ENCODE measurements at regions of chr6 and their contacts with region 1.

Region 1: DNA sequence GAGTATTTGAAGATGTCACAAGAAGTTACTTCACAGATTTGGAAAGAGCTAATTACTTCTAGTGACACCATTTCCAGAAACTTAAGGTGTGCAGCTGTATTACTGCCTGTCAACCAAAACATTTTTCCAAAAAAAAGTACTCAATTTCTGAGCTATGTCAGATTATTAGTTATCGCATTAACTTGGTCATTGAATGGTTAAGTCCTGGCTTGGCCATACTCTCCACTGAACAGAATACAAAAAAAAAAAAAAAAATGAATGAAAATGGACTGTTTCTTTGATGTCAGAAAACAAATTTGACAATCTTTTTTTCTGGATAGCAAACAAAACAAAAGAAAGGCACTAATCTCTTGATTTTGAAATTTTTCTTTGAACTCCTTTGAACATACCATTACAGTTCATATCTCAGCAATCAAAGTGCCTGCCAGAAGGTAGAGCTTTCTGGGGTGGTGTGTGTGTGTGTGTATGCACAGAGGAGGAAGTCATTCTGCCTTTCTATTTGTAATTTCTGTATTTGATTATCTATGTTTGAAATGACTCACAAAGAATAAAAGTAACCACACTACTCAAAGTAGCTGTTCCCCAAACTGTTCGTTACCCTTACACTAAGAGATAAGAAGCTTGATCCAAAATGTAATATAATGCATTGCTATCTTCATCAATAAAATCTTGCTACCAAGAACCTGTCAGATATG is 210.8 kb upstream of the FUT9 start:
- DNase-seq: peak; percentile 13
- H3K4me3 Mint-ChIP-seq: no peak overlapping the region
- H3K27ac Mint-ChIP-seq: no peak overlapping the region
- H3K4me1 Mint-ChIP-seq: peaks cover 14% of the 10 kb centered on the region
- H3K27me3 Mint-ChIP-seq: peaks cover 5% of the 10 kb centered on the region

Region 2: GRCh38 chr6:95577304-95578105 is 227.5 kb before region 1 on chr6 and contains the start of gene MANEA:
- intact Hi-C with region 1: loop called (anchors 1 kb)
- DNase-seq: peak; percentile 79
- H3K4me3 Mint-ChIP-seq: peak within 1 kb of the TSS; percentile 95
- H3K27ac Mint-ChIP-seq: peak within 1 kb of the TSS; percentile 99
- H3K4me1 Mint-ChIP-seq: peaks cover 45% of the 10 kb centered on the region
- H3K27me3 Mint-ChIP-seq: no peaks in the 10 kb centered on the region
- total RNA-seq, gene MANEA: 22.5 and 23.1 TPM in 2 replicates

Region 3: GRCh38 chr6:95784869-95785268 is 20.1 kb before region 1 on chr6:
- intact Hi-C with region 1: loop called (anchors 1 kb)
- DNase-seq: no peak
- H3K4me3 Mint-ChIP-seq: no peak overlapping the region
- H3K27ac Mint-ChIP-seq: no peak overlapping the region
- H3K4me1 Mint-ChIP-seq: peaks cover 6% of the 10 kb centered on the region
- H3K27me3 Mint-ChIP-seq: no peaks in the 10 kb centered on the region

Region 4: GRCh38 chr6:96907498-96907897 is 1102.5 kb after region 1 on chr6:
- intact Hi-C with region 1: loop called (anchors 5 kb)
- DNase-seq: no peak
- H3K4me3 Mint-ChIP-seq: no peak overlapping the region
- H3K27ac Mint-ChIP-seq: no peak overlapping the region
- H3K4me1 Mint-ChIP-seq: peaks cover 24% of the 10 kb centered on the region
- H3K27me3 Mint-ChIP-seq: peaks cover 4% of the 10 kb centered on the region

Measured in activated T-helper 2 cell treated with anti-CD3 and anti-CD28 coated beads, Interferon-gamma antibody, Interleukin-2, Interleukin-4, amounts not matched to agents 10 μg/mL and 5 μg/mL and 100 μg/mL, durations not matched to agents 14 hours and 24 hours and 36 hours (primary cell).